ENCODE measurements at regions of chr17 and their contacts with region 1.

Region 1: DNA sequence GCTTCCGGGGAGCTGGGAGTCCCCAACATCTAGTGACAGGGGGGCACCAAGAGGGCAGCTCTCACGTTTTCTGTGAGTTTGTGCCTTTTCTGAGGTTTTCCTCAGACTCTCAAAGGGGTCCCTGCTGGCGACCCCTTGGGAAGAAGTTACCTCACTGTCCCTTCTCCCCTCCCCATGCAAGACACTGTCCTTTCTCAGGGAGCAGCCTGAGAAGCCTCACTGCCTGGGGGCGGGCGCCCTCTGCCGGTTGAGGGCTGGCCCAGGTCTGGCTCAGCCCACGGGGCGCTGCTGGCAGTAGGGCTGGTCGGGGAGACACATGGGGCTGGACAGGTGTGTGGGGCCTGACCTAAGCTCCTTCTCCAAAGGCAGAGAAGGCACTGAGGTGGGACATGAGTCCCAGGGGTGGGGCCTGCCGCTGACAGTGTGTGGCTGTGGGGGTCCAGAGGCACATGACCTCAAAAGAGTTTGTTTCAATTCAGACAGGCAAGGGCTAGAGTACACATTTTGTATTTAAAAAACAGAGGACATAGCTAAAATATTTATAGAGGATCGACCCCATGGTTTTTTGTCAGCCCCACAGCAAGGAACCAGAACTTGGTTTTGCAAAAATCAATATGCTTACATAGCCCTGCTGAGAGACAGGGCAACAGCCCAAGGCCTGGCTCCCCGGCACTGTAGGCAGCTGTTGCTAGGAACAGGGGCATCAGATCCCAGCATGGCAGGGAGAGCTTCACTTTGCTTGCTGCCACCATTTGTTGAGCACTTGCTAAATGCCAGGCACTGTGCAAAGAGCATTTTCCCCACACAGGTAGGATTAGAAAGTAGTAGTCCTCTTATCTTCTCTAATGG is 18.5 kb upstream of the ALDH3A1 start:
- DNase-seq: peak; percentile 86
- H3K4me3 Mint-ChIP-seq: no peak overlapping the region
- H3K27ac Mint-ChIP-seq: peak overlapping the region; percentile 5
- H3K4me1 Mint-ChIP-seq: peaks cover 46% of the 10 kb centered on the region
- H3K27me3 Mint-ChIP-seq: no peaks in the 10 kb centered on the region

Region 2: DNA sequence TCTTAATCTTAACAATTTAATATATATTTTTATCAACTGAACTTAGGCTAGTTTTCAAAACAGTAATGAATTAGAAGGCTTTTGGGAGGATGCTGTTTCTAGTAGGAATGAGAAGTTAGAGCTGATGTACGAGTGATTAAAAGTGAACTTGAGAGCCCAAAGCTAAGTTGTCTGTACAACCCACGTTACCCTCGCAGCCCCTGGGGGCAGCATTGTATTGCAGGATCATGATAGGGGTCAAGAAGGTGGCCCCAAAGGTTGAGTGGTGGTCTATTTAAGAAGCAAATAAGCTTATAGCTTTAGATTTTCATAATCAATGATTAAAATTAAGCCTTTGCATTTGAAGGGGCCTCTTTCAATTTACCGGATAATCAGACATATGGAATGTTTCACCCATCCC is 151.7 kb before region 1 on chr17:
- CTCF ChIA-PET with region 1: interaction called, 11 read pairs
- POLR2A ChIA-PET with region 1: no interaction called
- intact Hi-C with region 1: no loop called
- DNase-seq: no peak
- H3K4me3 Mint-ChIP-seq: no peak overlapping the region
- H3K27ac Mint-ChIP-seq: no peak overlapping the region
- H3K4me1 Mint-ChIP-seq: peaks cover 4% of the 10 kb centered on the region
- H3K27me3 Mint-ChIP-seq: no peaks in the 10 kb centered on the region

Region 3: DNA sequence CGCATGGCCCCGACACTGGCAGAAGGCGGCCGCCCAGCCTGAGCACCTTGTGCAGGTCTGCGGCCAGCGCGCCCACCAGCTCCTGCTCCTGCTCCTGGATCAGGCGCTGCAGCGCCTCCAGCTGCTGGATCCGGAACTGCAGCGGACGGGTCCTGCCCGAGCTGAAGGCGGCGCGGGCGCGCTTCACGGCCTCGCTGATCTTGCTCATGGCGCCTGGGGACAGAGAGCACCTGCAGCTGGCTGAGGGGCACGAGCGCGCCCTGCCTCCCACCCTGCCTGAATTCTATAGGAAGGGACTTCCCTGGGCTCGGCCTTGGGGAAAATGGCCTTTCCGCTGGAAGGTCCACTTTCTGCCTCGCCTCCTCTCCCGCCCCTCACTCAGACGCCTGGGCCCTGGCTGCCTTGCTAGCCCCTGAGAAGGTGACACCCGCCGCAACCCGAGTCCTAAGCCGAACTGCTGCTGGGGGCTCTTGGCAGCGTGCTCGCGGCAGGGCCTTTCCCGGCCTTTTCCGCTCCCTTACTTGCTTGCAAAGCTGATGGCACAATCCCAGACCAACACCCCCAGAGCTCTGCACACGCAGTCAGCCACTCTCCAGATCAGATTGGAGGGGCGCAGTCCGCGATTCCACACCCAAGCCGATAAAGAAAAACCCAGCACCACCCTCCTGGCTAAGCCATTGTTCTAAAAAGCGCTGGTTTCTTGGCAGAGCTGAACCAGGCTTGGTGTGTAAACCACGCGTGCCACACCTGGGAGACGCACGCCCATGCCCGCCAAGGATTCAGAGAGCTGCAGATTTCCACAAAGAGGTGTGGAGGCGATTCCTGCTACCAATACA is 21.5 kb before region 1 on chr17:
- CTCF ChIA-PET with region 1: interaction called, 72 read pairs
- POLR2A ChIA-PET with region 1: no interaction called
- intact Hi-C with region 1: no loop called
- DNase-seq: peak; percentile 93
- H3K4me3 Mint-ChIP-seq: peak overlapping the region; percentile 48
- H3K27ac Mint-ChIP-seq: no peak overlapping the region
- H3K4me1 Mint-ChIP-seq: peaks cover 5% of the 10 kb centered on the region
- H3K27me3 Mint-ChIP-seq: peaks cover 11% of the 10 kb centered on the region

Region 4: GRCh38 chr17:19781488-19782458 is 15.1 kb after region 1 on chr17:
- CTCF ChIA-PET with region 1: interaction called, 21 read pairs
- POLR2A ChIA-PET with region 1: interaction called, 5 read pairs
- intact Hi-C with region 1: no loop called
- DNase-seq: peak; percentile 30
- H3K4me3 Mint-ChIP-seq: no peak overlapping the region
- H3K27ac Mint-ChIP-seq: peak overlapping the region; percentile 16
- H3K4me1 Mint-ChIP-seq: peaks cover 9% of the 10 kb centered on the region
- H3K27me3 Mint-ChIP-seq: no peaks in the 10 kb centered on the region